ENCODE measurements at regions of chr16 and their contacts with region 1.

Region 1: DNA sequence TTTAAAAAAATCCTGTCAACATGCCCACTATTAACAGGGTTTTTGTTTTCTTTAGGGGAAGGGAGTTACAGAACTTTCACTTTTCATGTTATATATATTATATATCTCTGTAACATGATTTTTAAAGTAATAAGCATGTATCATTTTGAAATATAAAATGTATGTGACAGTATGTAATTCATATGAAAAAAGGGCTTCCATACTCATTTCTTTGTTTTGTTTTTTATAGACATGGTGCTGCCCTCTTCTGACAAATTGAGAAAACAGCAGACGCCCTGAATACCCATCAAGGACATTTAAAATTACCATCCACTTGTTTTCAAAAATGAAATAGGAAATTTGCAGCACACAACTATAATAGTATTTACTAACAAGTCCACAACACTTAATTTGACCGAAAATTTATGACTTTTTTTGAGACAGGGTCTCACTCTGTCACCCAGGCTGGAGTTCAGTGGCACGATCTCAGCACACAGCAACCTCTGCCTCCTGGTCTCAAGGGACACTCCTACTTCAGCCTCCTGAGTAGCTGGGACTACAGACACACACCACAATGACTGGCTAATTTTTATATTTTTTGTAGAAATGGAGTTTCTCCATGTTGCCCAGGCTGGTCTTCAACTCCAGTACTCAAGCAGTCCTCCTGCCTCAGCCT is 30.4 kb downstream of the CFDP1 start:
- DNase-seq: no peak
- ATAC-seq: peak; percentile 50
- H3K4me3 Mint-ChIP-seq: no peak overlapping the region
- H3K27ac Mint-ChIP-seq: no peak overlapping the region
- H3K4me1 Mint-ChIP-seq: no peaks in the 10 kb centered on the region
- H3K27me3 Mint-ChIP-seq: no peaks in the 10 kb centered on the region
- CTCF ChIP-seq: peak; percentile 60

Region 2: DNA sequence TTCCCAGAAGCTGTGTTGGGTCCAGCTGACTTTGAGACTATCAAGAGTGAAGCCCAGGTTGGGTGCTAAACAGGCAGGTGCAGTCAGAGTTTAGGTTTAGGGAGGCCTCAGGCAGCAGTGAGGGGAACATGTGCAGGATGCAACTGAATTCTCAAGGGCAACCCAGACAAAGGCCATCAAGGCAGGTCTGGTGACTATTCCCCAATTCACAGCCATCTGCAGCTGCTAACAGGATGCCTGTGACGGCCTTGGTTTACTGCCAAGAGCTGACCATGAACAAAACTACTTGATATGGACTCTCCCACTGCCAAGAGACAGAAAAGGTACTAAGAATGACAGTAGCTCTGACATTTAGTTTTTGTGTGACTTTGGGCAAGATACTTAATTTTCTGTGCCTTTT is 106.3 kb before region 1 on chr16:
- CTCF ChIA-PET with region 1: no interaction called
- POLR2A ChIA-PET with region 1: no interaction called
- intact Hi-C with region 1: no loop called
- DNase-seq: no peak
- ATAC-seq: no peak
- H3K4me3 Mint-ChIP-seq: no peak overlapping the region
- H3K27ac Mint-ChIP-seq: no peak overlapping the region
- H3K4me1 Mint-ChIP-seq: no peaks in the 10 kb centered on the region
- H3K27me3 Mint-ChIP-seq: no peaks in the 10 kb centered on the region
- CTCF ChIP-seq: no peak

Region 3: DNA sequence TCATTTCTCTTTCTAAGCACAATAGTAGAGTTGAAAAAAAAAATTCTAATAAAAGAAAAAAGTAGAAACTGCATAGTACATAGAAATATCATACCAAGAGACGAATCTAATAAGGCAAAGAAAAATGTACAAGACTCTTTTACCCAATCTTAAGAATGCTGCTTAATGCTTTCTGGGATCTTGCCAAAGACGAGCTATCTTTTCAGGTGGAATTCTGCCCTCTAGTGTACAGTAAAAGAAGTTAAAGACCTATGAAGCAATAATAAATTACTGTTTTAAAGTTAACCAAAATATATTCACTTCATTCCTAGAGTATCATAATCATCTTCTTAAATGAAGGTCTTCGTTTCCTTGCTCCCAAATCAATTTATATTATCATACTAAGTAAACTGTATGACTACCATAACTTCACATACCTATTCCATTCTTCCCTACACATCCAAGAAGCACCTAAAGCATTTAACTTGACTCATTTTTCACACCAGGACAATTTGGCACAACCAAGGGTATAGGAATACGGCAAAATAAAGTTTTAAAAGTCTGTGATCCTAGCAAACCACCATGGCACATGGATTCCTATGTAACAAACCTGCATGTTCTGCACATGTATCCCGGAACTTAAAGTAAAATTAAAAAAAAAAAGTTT is 17.3 kb before region 1 on chr16:
- CTCF ChIA-PET with region 1: interaction called, 8 read pairs
- POLR2A ChIA-PET with region 1: no interaction called
- intact Hi-C with region 1: loop called (anchors 2 kb)
- DNase-seq: no peak
- ATAC-seq: peak; percentile 37
- H3K4me3 Mint-ChIP-seq: no peak overlapping the region
- H3K27ac Mint-ChIP-seq: no peak overlapping the region
- H3K4me1 Mint-ChIP-seq: peaks cover 9% of the 10 kb centered on the region
- H3K27me3 Mint-ChIP-seq: peaks cover 31% of the 10 kb centered on the region
- CTCF ChIP-seq: peak; percentile 51

Region 4: GRCh38 chr16:75420987-75421819 is 18.3 kb after region 1 on chr16:
- CTCF ChIA-PET with region 1: no interaction called
- POLR2A ChIA-PET with region 1: no interaction called
- intact Hi-C with region 1: loop called (anchors 2 kb)
- DNase-seq: no peak
- ATAC-seq: peak; percentile 42
- H3K4me3 Mint-ChIP-seq: no peak overlapping the region
- H3K27ac Mint-ChIP-seq: no peak overlapping the region
- H3K4me1 Mint-ChIP-seq: peaks cover 17% of the 10 kb centered on the region
- H3K27me3 Mint-ChIP-seq: no peaks in the 10 kb centered on the region
- CTCF ChIP-seq: no peak